MCF 10A (cell line): ENCODE measurements at regions of chr1 and their contacts with region 1.

Region 1: DNA sequence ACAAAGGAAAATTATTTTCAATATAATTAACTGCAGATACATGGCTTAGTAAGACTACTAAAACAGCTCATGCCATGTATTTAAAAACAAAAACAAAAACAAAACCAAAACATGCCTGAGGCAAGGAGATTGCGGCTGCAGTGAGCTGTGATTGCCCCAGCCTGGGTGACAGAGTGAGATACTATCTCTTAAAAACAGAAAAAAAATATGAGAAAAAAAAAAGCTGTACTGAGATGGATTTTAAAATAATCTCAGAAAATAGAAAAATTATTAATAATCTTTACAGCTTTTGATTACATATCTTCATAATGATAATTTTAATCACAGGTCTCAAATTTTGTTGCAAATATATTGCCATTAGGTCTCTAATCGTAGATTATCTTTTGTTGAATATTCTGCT is 24.0 kb upstream of the LIN9 start:
- DNase-seq: no peak
- H3K4me3 Mint-ChIP-seq: peak overlapping the region; percentile 9
- H3K27ac Mint-ChIP-seq: no peak overlapping the region
- H3K4me1 Mint-ChIP-seq: peaks cover 6% of the 10 kb centered on the region
- H3K27me3 Mint-ChIP-seq: no peaks in the 10 kb centered on the region
- CTCF ChIP-seq: no peak

Region 2: GRCh38 chr1:226128487-226129075 is 204.4 kb before region 1 on chr1:
- CTCF ChIA-PET with region 1: interaction called, 118 read pairs
- POLR2A ChIA-PET with region 1: interaction called, 19 read pairs
- intact Hi-C with region 1: loop called (anchors 1 kb)
- DNase-seq: peak; percentile 57
- H3K4me3 Mint-ChIP-seq: peak overlapping the region; percentile 21
- H3K27ac Mint-ChIP-seq: peak overlapping the region; percentile 73
- H3K4me1 Mint-ChIP-seq: peaks cover 42% of the 10 kb centered on the region
- H3K27me3 Mint-ChIP-seq: no peaks in the 10 kb centered on the region
- CTCF ChIP-seq: no peak

Region 3: DNA sequence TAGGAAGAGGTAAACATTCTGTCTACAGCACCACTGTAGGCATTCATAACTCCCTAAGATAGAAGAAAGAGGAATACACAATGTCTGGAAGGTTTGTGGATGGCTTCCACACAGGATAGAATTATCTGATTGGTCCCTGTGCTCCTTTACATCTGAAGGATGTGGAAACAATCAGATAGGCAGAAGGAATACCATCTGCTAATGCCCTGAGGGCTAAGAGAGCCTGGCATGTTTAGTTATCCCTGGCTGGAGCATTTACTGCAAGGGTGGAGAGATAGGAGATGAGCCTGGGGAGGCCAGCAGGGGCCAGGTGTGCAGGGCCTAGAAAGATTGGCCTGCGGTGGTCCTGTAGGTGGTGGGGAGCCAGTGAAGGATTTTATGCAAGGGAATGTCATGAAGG is 137.8 kb before region 1 on chr1:
- CTCF ChIA-PET with region 1: interaction called, 19 read pairs
- POLR2A ChIA-PET with region 1: interaction called, 4 read pairs
- intact Hi-C with region 1: no loop called
- DNase-seq: peak; percentile 30
- H3K4me3 Mint-ChIP-seq: no peak overlapping the region
- H3K27ac Mint-ChIP-seq: no peak overlapping the region
- H3K4me1 Mint-ChIP-seq: no peaks in the 10 kb centered on the region
- H3K27me3 Mint-ChIP-seq: peaks cover 8% of the 10 kb centered on the region
- CTCF ChIP-seq: no peak

Region 4: GRCh38 chr1:226201029-226201593 is 131.8 kb before region 1 on chr1:
- CTCF ChIA-PET with region 1: interaction called, 19 read pairs
- POLR2A ChIA-PET with region 1: interaction called, 4 read pairs
- intact Hi-C with region 1: loop called (anchors 1 kb)
- DNase-seq: peak; percentile 54
- H3K4me3 Mint-ChIP-seq: no peak overlapping the region
- H3K27ac Mint-ChIP-seq: no peak overlapping the region
- H3K4me1 Mint-ChIP-seq: no peaks in the 10 kb centered on the region
- H3K27me3 Mint-ChIP-seq: peaks cover 13% of the 10 kb centered on the region
- CTCF ChIP-seq: peak; percentile 39

Region 5: DNA sequence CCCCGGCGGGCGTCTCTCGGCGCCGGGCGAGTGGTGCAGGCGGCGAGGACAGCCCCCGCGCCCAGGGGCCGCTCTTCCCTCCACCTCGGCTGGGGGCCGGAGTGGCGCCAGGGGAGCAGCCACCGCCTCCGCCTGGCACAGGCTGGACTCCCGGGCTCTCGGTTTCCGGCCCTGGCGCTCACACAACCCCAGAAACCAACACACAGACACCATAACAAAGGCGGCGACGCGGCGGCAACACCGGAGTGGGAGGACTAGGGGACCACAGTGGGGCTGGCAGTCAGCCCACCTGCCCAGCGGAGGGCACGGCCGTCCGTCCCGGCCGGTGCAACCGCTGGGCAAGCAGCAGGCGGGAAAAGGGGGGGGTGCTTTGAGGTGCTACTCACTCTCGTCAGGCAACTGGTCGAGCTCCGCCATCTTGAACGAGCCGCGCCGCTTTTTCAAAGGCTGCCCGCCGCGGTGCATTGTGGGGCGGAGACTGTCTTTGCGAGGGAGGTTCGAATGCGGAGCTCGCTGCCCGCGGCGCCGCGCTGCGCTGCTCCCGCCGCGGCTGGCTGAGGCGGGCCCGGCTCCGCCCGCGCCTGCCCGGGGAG is 24.1 kb before region 1 on chr1 and contains the start of gene LIN9:
- CTCF ChIA-PET with region 1: interaction called, 33 read pairs
- POLR2A ChIA-PET with region 1: interaction called, 40 read pairs
- intact Hi-C with region 1: no loop called
- DNase-seq: peak; percentile 98
- H3K4me3 Mint-ChIP-seq: peak within 1 kb of the TSS; percentile 84
- H3K27ac Mint-ChIP-seq: peak within 1 kb of the TSS; percentile 82
- H3K4me1 Mint-ChIP-seq: peaks cover 34% of the 10 kb centered on the region
- H3K27me3 Mint-ChIP-seq: no peaks in the 10 kb centered on the region
- CTCF ChIP-seq: no peak
- total RNA-seq, gene LIN9: 10.3 and 10.4 TPM in 2 replicates

Region 6: GRCh38 chr1:226351709-226352108 is 18.8 kb after region 1 on chr1:
- CTCF ChIA-PET with region 1: interaction called, 10 read pairs
- POLR2A ChIA-PET with region 1: interaction called, 5 read pairs
- intact Hi-C with region 1: no loop called
- DNase-seq: no peak
- H3K4me3 Mint-ChIP-seq: no peak overlapping the region
- H3K27ac Mint-ChIP-seq: no peak overlapping the region
- H3K4me1 Mint-ChIP-seq: no peaks in the 10 kb centered on the region
- H3K27me3 Mint-ChIP-seq: no peaks in the 10 kb centered on the region
- CTCF ChIP-seq: no peak